A673 (cell line): ENCODE measurements at regions of chr6 and their contacts with region 1.

Region 1: GRCh38 chr6:37791156-37791919 is 28.2 kb upstream of the ZFAND3 start:
- DNase-seq: peak; percentile 97
- H3K4me3 ChIP-seq: no peak overlapping the region
- H3K27ac ChIP-seq: no peak overlapping the region
- H3K4me1 ChIP-seq: peaks cover 7% of the 10 kb centered on the region
- H3K27me3 ChIP-seq: no peaks in the 10 kb centered on the region
- CTCF ChIP-seq: peak; percentile 98

Region 2: DNA sequence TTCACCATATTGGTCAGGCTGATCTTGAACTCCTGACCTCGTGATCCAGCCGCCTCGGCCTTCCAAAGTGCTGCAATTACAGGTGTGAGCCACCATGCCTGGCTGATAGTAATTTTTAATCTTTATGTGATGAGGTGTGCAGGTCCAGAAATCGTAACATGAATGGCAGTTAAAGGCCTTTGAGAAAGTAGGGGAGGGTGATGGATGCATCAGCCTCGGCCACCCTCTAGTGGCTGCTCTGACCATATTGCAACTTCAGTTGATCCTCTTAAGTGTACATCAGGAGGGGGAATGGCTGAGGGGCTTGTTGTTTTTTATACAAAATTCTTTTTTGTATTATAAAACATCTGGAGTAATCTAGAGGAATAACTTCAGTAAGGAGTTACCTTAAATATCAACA is 221.2 kb after region 1 on chr6:
- CTCF ChIA-PET with region 1: interaction called, 3 read pairs
- POLR2A ChIA-PET with region 1: no interaction called
- intact Hi-C with region 1: loop called (anchors 1 kb)
- DNase-seq: peak; percentile 60
- H3K4me3 ChIP-seq: no peak overlapping the region
- H3K27ac ChIP-seq: no peak overlapping the region
- H3K4me1 ChIP-seq: no peaks in the 10 kb centered on the region
- H3K27me3 ChIP-seq: no peaks in the 10 kb centered on the region
- CTCF ChIP-seq: peak; percentile 83

Region 3: GRCh38 chr6:38077488-38078030 is 286.2 kb after region 1 on chr6:
- CTCF ChIA-PET with region 1: interaction called, 10 read pairs
- POLR2A ChIA-PET with region 1: no interaction called
- intact Hi-C with region 1: no loop called
- DNase-seq: no peak
- H3K4me3 ChIP-seq: no peak overlapping the region
- H3K27ac ChIP-seq: no peak overlapping the region
- H3K4me1 ChIP-seq: no peaks in the 10 kb centered on the region
- H3K27me3 ChIP-seq: no peaks in the 10 kb centered on the region
- CTCF ChIP-seq: no peak

Region 4: DNA sequence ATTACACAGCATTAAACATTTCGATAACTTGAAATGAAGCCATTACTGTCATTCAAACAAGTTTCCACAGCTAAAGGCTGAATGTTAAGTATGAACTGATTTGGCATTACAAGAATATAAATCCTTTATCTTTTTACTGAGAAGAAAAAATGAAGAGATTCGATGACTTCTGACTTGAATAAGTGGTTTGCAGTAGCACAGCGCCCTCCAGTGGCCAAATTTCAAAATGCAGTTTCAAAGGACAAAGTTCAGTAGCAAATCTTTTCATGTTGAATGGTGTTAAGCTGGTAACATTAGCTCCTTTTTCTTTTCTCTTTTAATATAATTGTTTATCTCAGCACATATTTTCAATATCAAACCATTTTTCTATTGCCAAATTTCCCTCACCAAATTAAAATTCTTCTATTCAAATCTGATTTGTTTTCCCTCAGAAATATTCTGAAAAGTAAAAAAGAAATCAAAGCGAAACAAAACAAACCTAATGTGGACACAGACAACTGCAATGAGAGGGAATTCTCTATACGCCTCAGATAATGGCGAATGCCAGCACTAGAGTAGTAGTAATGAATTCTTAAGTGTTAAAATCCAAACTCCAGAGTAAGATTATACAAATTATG is 702.7 kb after region 1 on chr6:
- CTCF ChIA-PET with region 1: no interaction called
- POLR2A ChIA-PET with region 1: no interaction called
- intact Hi-C with region 1: loop called (anchors 5 kb)
- DNase-seq: peak; percentile 69
- H3K4me3 ChIP-seq: no peak overlapping the region
- H3K27ac ChIP-seq: no peak overlapping the region
- H3K4me1 ChIP-seq: no peaks in the 10 kb centered on the region
- H3K27me3 ChIP-seq: no peaks in the 10 kb centered on the region
- CTCF ChIP-seq: peak; percentile 90